SK-N-SH (cell line): ENCODE measurements at regions of chr7 and their contacts with region 1.

Region 1: DNA sequence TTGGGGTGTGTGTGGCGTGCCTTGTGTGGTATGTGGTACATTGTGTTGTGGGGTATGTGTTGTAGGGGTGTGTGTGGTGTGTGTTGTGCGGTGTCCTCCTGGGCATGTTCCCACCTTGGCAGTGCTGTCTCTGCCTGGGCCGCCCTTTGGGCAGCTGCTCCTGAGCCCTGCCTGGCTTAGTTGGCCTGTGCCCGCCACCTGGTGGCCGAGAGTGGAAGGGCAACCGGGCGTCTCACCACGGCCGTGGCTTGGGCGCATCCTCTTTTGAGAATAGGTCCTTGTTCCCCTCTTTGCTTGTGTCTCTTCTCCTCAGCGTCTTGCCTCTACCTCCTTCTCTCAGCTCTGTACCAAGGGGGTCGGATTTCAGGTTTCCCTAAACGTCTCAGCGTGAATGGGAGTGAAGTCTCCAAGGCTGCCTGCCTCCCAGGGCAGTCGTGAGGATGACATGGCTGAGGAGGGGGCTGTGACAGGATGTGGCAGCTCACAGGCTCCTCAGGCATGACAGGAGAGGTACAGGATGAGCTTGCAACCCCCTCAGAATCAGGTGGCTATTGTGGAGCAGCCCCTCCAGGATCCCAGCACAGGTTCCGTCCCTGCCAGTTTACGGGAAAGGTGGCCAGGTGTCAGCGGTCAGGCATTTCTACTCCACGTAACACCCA is 98.4 kb upstream of the PODXL start:
- DNase-seq: peak; percentile 92
- H3K4me3 ChIP-seq: 0 out of 4 replicates have a peak overlapping the region, but pooled peaks of 1 of the 2 experiments have one; percentile 10
- H3K27ac ChIP-seq: peak overlapping the region in 1 of 2 experiments; percentile 9; a peak in 1 of 4 replicates
- H3K4me1 ChIP-seq: no peaks in the 10 kb centered on the region; a peak in 1 of 4 replicates
- H3K27me3 ChIP-seq: no peaks in the 10 kb centered on the region
- CTCF ChIP-seq: peak; percentile 98
- EP300 ChIP-seq: no peak
- RAD21 ChIP-seq: peak; percentile 98

Region 2: GRCh38 chr7:131482800-131483199 is 172.0 kb before region 1 on chr7:
- CTCF ChIA-PET with region 1: no interaction called
- POLR2A ChIA-PET with region 1: no interaction called
- DNase-seq: no peak
- H3K4me3 ChIP-seq: no peak overlapping the region
- H3K27ac ChIP-seq: no peak overlapping the region
- H3K4me1 ChIP-seq: peaks cover 3 to 17% of the 10 kb centered on the region in 2 experiments
- H3K27me3 ChIP-seq: no peaks in the 10 kb centered on the region
- CTCF ChIP-seq: no peak
- EP300 ChIP-seq: no peak
- RAD21 ChIP-seq: no peak

Region 3: DNA sequence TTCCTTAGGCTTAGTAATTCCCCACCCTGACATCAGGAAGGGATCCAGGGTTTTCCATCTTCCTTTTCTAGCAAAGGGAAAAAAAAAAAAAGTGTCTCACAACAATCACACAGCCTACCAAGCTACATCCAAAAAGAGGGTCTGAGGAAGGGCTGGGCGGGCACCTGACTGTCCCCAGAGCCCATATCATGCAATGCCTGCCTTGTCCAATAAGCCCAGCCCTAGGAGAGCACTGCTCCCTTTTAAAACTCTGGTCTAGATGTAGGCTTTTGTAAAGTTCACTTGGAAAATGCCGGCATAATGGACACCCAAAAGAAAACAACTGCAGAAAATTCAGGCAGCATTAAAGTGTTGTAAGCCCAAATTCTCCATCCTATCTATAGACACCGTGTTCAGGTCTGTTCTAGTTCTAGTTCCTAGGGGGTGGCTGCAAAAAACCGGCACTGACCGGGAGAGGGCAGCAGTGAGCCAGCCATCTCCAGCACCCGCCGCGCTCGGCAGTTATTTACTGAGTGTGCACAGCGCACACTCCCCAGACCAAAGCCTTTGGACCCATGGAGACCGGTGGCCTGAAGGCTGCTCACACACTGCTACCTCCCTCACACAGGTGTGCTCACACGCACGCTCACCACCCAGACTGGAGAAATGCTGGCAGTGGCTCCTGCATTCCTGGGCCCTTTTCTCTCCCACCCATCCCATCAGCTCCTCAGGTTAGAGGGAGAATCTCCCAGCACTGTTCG is 147.0 kb before region 1 on chr7:
- CTCF ChIA-PET with region 1: interaction called, 291 read pairs
- POLR2A ChIA-PET with region 1: interaction called, 3 read pairs
- DNase-seq: peak; percentile 88
- H3K4me3 ChIP-seq: no peak overlapping the region
- H3K27ac ChIP-seq: peak overlapping the region in 1 of 2 experiments; percentile 29; a peak in 2 of 4 replicates
- H3K4me1 ChIP-seq: peaks cover 9 to 20% of the 10 kb centered on the region in 2 experiments; a peak in 3 of 4 replicates
- H3K27me3 ChIP-seq: no peaks in the 10 kb centered on the region
- CTCF ChIP-seq: peak; percentile 100
- EP300 ChIP-seq: no peak
- RAD21 ChIP-seq: peak; percentile 95

Region 4: DNA sequence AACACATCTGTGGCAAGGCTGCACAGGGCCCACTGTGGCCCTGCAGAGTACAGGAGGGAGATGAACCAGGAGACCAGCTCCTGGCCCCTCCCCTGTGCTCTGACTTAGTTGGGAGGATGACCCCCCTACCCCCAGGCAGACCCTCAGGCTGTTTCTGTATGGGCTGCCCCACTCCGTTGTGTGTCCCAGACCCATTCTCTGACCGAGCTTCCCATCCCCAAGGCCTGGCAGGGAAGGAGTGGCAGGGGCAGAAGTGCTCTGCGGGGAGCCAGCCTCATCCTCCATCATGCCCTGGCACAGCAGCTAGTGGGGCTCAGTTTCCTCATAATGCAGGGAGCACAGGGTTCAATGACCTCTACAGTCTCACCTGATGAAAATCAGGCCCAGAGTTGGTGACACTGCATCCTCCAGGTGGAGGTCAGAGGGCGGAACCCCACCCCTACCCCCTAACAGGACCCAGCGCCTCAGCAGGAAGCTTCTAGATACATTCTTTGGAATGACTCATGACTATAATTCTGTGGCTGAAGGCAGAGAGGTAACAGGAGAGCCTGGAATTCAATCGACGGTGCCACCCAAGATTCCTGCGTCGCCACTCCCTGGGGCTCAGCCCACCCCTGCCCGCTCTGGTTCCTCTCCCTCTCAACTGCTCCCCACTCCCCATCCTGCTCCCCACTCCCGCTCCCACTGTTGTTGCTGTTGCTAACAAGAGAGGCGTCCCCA is 116.6 kb before region 1 on chr7:
- CTCF ChIA-PET with region 1: interaction called, 160 read pairs
- POLR2A ChIA-PET with region 1: no interaction called
- DNase-seq: no peak
- H3K4me3 ChIP-seq: no peak overlapping the region
- H3K27ac ChIP-seq: peak overlapping the region; percentile 64 to 76
- H3K4me1 ChIP-seq: peaks cover 27 to 34% of the 10 kb centered on the region in 2 experiments; a peak in 3 of 4 replicates
- H3K27me3 ChIP-seq: no peaks in the 10 kb centered on the region
- CTCF ChIP-seq: no peak
- EP300 ChIP-seq: peak in 1 of 2 experiments; percentile 66; a peak in 1 of 4 replicates
- RAD21 ChIP-seq: no peak

Region 5: GRCh38 chr7:131562941-131563340 is 91.9 kb before region 1 on chr7:
- CTCF ChIA-PET with region 1: interaction called, 20 read pairs
- POLR2A ChIA-PET with region 1: no interaction called
- DNase-seq: no peak
- H3K4me3 ChIP-seq: no peak overlapping the region
- H3K27ac ChIP-seq: no peak overlapping the region
- H3K4me1 ChIP-seq: peaks cover 0 to 3% of the 10 kb centered on the region in 2 experiments; a peak in 1 of 4 replicates
- H3K27me3 ChIP-seq: no peaks in the 10 kb centered on the region
- CTCF ChIP-seq: no peak
- EP300 ChIP-seq: no peak
- RAD21 ChIP-seq: no peak

Region 6: DNA sequence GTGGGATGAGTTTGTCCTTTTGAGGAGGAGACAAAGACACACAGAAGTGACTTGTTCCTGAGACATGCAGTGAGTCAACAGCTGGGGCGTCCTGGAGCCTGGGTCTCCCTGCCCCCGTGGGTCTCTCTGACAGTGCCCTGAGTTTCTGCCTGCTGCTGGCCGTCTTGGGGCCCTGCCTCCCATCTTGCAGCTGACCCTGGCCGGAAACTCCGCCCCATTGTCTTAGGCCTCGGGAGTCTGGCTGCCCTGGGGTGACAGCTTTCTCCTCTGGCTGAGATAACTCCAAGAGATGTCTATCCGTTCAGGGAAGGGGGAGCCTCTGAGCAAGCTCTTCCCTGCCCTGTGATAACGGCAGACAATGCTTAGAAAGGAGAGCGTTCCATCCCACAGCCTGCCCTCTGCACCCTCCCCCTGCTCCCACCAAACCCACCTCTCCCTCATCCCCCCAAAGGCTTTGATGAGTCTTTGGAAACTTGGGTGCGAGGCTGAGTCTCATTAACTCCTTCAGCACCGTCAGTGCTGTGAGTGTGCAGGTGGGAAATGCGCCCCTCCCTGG is 28.9 kb before region 1 on chr7:
- CTCF ChIA-PET with region 1: interaction called, 17 read pairs
- POLR2A ChIA-PET with region 1: no interaction called
- DNase-seq: peak; percentile 56
- H3K4me3 ChIP-seq: no peak overlapping the region
- H3K27ac ChIP-seq: peak overlapping the region; percentile 39 to 93; a peak in 3 of 4 replicates
- H3K4me1 ChIP-seq: peaks cover 18 to 51% of the 10 kb centered on the region in 2 experiments; a peak in 3 of 4 replicates
- H3K27me3 ChIP-seq: no peaks in the 10 kb centered on the region
- CTCF ChIP-seq: peak; percentile 42
- EP300 ChIP-seq: peak in 1 of 2 experiments; percentile 97; a peak in 2 of 4 replicates
- RAD21 ChIP-seq: no peak

Region 7: DNA sequence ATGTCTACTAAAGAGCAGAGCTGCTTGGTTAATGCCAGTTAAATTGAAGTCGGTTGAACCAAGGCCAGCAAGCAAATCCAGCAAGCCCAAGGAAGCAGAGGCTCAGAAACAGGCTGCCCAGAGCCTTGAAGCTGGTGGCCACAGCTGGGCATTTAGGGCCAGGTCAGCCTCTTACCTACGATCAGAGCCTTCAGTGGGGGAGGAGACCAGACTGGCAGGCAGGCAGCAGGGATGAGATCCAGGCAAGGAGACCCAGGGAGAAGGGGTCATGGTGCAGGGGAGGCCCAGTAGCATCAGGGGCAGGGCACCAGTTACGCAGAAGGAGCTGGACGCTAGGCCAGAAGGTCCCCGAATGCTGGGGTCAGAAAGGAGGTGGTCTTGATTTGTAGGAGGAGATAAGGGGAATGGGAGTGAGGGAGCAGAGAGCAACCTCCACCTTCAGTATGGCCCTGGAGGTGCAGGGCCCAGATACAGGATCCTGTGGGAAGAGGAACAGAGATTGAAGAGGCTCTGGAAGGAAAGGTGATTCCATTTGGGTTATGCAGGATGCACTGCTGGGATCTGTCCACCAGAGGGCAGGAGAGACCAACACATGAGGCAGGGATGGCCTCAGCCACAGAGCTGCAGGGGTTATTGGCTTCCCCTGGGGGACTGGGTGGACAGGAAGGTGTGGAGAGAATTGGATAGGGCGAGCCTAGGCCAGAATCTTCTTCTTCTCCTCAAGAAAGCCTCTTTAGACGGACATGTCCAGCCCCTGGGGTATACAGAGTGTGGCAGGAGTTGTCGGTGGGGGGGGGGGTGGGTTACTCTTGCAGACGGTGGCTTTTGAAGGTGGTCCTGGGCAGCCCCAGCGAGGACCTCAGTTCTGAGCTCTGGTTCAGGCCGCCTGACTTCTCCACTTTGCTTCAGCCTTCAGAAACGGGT is 34.2 kb after region 1 on chr7:
- CTCF ChIA-PET with region 1: interaction called, 12 read pairs
- POLR2A ChIA-PET with region 1: no interaction called
- DNase-seq: peak; percentile 95
- H3K4me3 ChIP-seq: no peak overlapping the region; a peak in 1 of 4 replicates
- H3K27ac ChIP-seq: no peak overlapping the region
- H3K4me1 ChIP-seq: peaks cover 0 to 4% of the 10 kb centered on the region in 2 experiments; a peak in 1 of 4 replicates
- H3K27me3 ChIP-seq: no peaks in the 10 kb centered on the region
- CTCF ChIP-seq: peak; percentile 99
- EP300 ChIP-seq: no peak
- RAD21 ChIP-seq: peak; percentile 100

Region 8: DNA sequence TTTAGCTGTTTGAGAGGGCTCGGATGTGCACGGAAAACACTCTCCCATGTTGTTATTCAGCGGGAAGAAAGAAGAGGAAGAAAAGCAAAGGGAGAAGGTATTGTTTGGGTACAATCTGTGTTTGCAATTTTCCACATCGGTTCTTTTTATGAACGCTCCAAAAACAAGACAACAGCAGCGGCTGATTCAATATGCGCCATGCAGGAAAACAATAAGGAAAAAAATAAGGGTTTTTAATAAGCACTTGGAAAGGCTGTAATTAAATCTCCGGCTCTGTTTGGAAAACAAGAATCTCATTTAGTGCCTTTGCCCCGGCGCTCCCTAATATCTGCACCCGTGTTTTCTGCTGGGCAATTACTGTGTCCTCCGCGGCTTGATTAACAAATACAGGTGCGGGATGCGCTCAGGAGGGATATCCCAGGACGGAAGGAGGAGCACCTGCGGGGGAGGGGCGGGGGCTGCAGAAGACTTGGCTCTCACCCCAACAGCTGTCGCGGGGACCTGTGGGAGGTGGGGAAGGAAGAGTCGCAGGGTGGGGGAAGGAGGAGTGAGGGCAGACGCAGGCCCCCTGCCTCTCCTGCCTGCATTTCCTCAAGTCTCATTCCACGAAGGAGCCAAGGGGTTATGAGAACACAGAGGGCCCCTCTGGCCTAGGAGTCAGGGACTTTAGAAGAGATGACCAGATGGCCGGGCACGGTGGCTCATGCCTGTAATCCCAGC is 83.1 kb after region 1 on chr7:
- CTCF ChIA-PET with region 1: no interaction called
- POLR2A ChIA-PET with region 1: no interaction called
- DNase-seq: no peak
- H3K4me3 ChIP-seq: no peak overlapping the region
- H3K27ac ChIP-seq: no peak overlapping the region
- H3K4me1 ChIP-seq: no peaks in the 10 kb centered on the region
- H3K27me3 ChIP-seq: peaks cover 15% of the 10 kb centered on the region; the same call in 1 of the 2 replicates
- CTCF ChIP-seq: no peak
- EP300 ChIP-seq: no peak
- RAD21 ChIP-seq: no peak